ENCODE measurements at regions of chr13 and their contacts with region 1.

Region 1: GRCh38 chr13:27147530-27148170 is 24.0 kb downstream of the USP12 start:
- DNase-seq: peak; percentile 74
- ATAC-seq: peak; percentile 83
- H3K4me3 ChIP-seq: peak overlapping the region; percentile 48
- H3K27ac ChIP-seq: peak overlapping the region; percentile 74
- H3K4me1 ChIP-seq: peaks cover 49% of the 10 kb centered on the region
- H3K27me3 ChIP-seq: no peaks in the 10 kb centered on the region
- CTCF ChIP-seq: no peak
- EP300 ChIP-seq: peak in 1 of 2 experiments; percentile 58; a peak in 1 of 4 replicates
- POLR2A ChIP-seq: no peak
- RAD21 ChIP-seq: no peak

Region 2: DNA sequence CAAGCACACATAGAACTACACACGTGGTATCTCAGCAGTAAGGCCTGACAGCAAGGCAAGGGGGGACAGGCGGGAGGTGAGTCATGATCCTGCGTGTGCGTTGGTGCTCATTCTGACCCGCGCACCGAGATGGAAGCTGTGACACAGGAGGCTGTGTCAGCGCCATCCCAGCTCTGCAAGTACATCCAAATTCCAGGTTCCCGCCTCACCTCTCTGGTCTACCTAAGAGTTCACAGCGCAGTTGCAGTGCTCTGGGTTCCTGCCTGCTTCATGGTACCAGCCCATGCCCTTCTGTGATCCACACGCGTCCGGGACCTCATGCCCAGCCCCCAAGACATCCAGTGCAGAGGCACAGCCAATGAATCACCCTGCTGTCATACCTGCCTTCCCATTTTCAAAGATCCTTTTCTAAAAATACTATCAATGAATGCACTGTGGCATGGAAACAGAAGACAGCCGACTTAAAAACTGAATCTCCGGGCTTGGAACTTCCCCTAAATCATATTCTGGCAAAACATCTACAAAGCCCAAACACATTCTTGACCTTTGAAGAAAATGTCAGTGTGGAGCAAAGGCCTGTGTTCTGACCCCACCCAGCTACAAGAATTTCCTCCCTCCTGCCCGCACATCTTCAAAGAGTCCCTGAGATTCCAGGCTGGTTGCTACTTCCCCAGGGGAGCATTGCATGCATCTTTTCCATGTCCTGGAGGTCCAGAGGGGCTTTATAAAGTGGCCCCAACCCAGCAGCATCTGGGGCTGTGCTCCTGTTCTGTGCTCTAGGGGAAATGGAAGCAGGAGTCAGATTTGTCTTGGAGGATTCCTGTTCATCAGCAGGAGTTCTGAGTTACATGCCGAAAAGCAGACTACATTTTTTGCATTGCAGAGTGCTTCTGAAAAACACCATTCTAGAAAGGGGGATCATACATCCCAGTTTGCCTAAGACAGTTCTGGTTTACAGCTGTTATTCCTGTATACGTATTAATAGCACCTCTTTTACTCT is 111.4 kb before region 1 on chr13:
- CTCF ChIA-PET with region 1: no interaction called
- POLR2A ChIA-PET with region 1: no interaction called
- RAD21 ChIA-PET with region 1: no interaction called
- SMC1A ChIA-PET with region 1: no interaction called
- in situ Hi-C with region 1: no loop called
- intact Hi-C with region 1: no loop called
- DNase-seq: no peak
- ATAC-seq: no peak
- H3K4me3 ChIP-seq: no peak overlapping the region
- H3K27ac ChIP-seq: no peak overlapping the region
- H3K4me1 ChIP-seq: no peaks in the 10 kb centered on the region
- H3K27me3 ChIP-seq: no peaks in the 10 kb centered on the region; a peak in 2 of 4 replicates
- CTCF ChIP-seq: no peak
- EP300 ChIP-seq: no peak
- POLR2A ChIP-seq: no peak
- RAD21 ChIP-seq: no peak

Region 3: GRCh38 chr13:27161980-27162379 is 14.3 kb after region 1 on chr13:
- CTCF ChIA-PET with region 1: interaction called, 6 read pairs
- POLR2A ChIA-PET with region 1: interaction called, 6 read pairs
- RAD21 ChIA-PET with region 1: interaction called, 53 read pairs
- SMC1A ChIA-PET with region 1: interaction called, 169 read pairs
- in situ Hi-C with region 1: no loop called
- intact Hi-C with region 1: no loop called
- DNase-seq: no peak
- ATAC-seq: peak; percentile 72
- H3K4me3 ChIP-seq: peak overlapping the region; percentile 16; the same call in 1 of the 2 replicates
- H3K27ac ChIP-seq: peak overlapping the region; percentile 5
- H3K4me1 ChIP-seq: peaks cover 10% of the 10 kb centered on the region
- H3K27me3 ChIP-seq: no peaks in the 10 kb centered on the region
- CTCF ChIP-seq: no peak
- EP300 ChIP-seq: no peak
- POLR2A ChIP-seq: no peak
- RAD21 ChIP-seq: no peak

Region 4: DNA sequence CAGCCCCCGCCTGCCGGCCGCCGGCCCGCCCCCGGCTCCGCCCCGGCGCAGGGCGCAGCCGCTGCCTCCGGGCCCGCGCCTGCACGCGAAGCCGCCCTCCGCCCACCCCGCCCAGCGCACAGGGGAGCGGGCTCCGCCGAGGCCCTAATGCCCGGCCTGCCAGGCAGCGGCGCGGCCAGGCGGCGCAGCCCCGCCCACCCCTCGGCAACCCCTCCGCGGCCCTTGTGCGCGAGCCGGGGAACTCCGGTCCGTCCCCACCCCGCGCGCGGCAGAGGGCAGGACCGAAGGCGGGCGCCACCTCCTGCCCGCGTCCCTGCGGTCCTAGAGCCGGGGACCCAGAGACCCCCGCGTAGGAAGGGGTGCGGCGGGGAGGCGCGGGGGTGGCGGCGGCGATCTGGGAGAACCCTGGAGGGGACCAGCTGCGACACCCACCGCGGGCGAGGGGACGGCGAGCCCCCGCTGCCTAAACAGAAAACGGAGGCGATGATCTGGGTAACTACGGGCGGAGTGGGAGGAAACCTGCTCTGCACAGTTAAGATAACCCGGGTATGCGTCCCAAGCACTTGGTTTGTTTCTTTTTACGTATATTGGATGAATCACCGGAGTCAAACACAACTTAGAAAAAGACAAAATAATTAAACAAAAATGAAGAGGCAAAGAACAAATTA is 24.3 kb after region 1 on chr13:
- CTCF ChIA-PET with region 1: interaction called, 5 read pairs
- POLR2A ChIA-PET with region 1: interaction called, 4 read pairs
- RAD21 ChIA-PET with region 1: interaction called, 53 read pairs
- SMC1A ChIA-PET with region 1: interaction called, 169 read pairs
- in situ Hi-C with region 1: no loop called
- intact Hi-C with region 1: no loop called
- DNase-seq: no peak
- ATAC-seq: peak; percentile 87
- H3K4me3 ChIP-seq: peak overlapping the region; percentile 59
- H3K27ac ChIP-seq: peak overlapping the region; percentile 74
- H3K4me1 ChIP-seq: peaks cover 11% of the 10 kb centered on the region
- H3K27me3 ChIP-seq: no peaks in the 10 kb centered on the region
- CTCF ChIP-seq: peak in 2 of 3 experiments; percentile 7 to 19; a peak in 1 of 6 replicates
- EP300 ChIP-seq: peak in 1 of 2 experiments; percentile 26; a peak in 1 of 4 replicates
- POLR2A ChIP-seq: peak; percentile 7; the same call in 1 of the 2 replicates
- RAD21 ChIP-seq: peak; percentile 23; the same call in 1 of the 2 replicates

Measured in GM12878 (cell line).